ENCODE measurements at regions of chr1 and their contacts with region 1.

Region 1: DNA sequence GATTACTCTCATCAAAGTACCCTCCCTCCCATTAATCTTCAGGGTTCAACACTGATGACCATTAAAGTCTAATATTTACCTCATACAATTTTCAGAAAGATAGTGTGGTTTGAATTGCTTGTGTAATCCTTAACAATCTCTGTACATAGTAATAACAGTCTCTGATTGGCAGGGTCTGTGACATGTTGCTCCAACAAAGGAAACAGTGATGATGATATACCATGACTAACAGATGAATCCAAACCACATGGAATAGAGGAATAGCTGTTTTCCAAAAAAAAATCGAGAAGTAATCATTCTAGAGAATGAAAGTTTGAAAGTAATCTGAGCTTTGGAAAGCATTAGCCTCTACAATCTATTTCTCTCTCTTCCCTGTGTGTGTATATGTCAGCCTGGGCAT is 610.1 kb upstream of the NEGR1 start:
- DNase-seq: peak; percentile 73
- ATAC-seq: peak; percentile 98
- H3K4me3 ChIP-seq: no peak overlapping the region
- H3K27ac ChIP-seq: peak overlapping the region; percentile 67
- H3K4me1 ChIP-seq: peaks cover 26% of the 10 kb centered on the region
- H3K27me3 ChIP-seq: no peaks in the 10 kb centered on the region
- CTCF ChIP-seq: no peak

Region 2: DNA sequence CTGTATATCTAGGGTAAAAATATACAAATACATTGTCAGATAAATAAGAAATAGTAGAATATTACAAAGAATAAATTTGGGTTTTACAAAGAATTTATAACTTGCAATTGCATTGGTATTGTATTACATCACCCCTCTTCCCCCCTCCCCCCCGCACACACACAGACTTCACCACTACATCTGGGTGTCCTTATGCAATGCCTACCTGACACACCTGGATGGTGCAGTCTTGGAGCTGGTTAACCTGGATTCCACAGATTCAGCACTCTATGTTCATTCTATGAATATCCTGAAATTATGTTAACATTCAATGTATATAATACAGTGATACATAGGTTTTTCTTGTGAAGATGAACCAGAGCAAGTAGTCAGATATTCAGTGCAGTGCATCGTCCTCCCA is 275.8 kb before region 1 on chr1:
- CTCF ChIA-PET with region 1: no interaction called
- POLR2A ChIA-PET with region 1: no interaction called
- intact Hi-C with region 1: no loop called
- DNase-seq: no peak
- ATAC-seq: no peak
- H3K4me3 ChIP-seq: no peak overlapping the region
- H3K27ac ChIP-seq: no peak overlapping the region
- H3K4me1 ChIP-seq: no peaks in the 10 kb centered on the region
- H3K27me3 ChIP-seq: no peaks in the 10 kb centered on the region
- CTCF ChIP-seq: no peak

Region 3: DNA sequence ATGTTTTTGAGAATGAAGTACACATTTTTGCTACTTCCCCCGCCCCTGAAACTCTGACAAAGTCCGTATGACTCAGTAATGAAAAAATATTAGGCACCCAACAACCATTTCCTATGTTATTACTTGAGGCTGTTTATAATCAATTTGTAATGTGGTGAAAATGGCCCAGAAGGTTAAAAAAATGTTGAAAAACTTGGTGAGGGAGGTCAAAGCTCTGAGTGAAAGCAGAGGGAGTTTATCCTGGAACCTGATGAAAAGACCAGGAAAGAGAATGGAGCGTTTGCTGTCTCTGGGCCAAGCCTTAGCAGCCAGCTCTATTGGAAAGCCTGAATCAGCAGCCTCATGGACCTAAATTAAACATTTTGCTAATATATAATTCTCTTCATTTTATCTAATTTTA is 242.5 kb before region 1 on chr1:
- CTCF ChIA-PET with region 1: no interaction called
- POLR2A ChIA-PET with region 1: no interaction called
- intact Hi-C with region 1: loop called (anchors 5 kb)
- DNase-seq: peak; percentile 35
- ATAC-seq: peak; percentile 55; the same call in 1 of the 2 replicates
- H3K4me3 ChIP-seq: no peak overlapping the region
- H3K27ac ChIP-seq: peak overlapping the region; percentile 32
- H3K4me1 ChIP-seq: peaks cover 13% of the 10 kb centered on the region
- H3K27me3 ChIP-seq: no peaks in the 10 kb centered on the region
- CTCF ChIP-seq: no peak

Region 4: GRCh38 chr1:73065339-73066041 is 173.0 kb after region 1 on chr1:
- CTCF ChIA-PET with region 1: no interaction called
- POLR2A ChIA-PET with region 1: no interaction called
- intact Hi-C with region 1: loop called (anchors 10 kb)
- DNase-seq: peak; percentile 45
- ATAC-seq: peak; percentile 97
- H3K4me3 ChIP-seq: no peak overlapping the region
- H3K27ac ChIP-seq: no peak overlapping the region
- H3K4me1 ChIP-seq: 0 out of 2 replicates have a peak, but pooled peaks cover 5% of the 10 kb centered on the region
- H3K27me3 ChIP-seq: no peaks in the 10 kb centered on the region
- CTCF ChIP-seq: no peak

Region 5: GRCh38 chr1:73100216-73100615 is 207.8 kb after region 1 on chr1:
- CTCF ChIA-PET with region 1: no interaction called
- POLR2A ChIA-PET with region 1: no interaction called
- intact Hi-C with region 1: loop called (anchors 10 kb)
- DNase-seq: peak; percentile 42
- ATAC-seq: peak; percentile 80
- H3K4me3 ChIP-seq: no peak overlapping the region
- H3K27ac ChIP-seq: no peak overlapping the region
- H3K4me1 ChIP-seq: no peaks in the 10 kb centered on the region
- H3K27me3 ChIP-seq: no peaks in the 10 kb centered on the region; the same call in 1 of the 2 replicates
- CTCF ChIP-seq: peak; percentile 55; the same call in 1 of the 2 replicates